H1 (cell line): ENCODE measurements at regions of chr6 and their contacts with region 1.

Region 1: DNA sequence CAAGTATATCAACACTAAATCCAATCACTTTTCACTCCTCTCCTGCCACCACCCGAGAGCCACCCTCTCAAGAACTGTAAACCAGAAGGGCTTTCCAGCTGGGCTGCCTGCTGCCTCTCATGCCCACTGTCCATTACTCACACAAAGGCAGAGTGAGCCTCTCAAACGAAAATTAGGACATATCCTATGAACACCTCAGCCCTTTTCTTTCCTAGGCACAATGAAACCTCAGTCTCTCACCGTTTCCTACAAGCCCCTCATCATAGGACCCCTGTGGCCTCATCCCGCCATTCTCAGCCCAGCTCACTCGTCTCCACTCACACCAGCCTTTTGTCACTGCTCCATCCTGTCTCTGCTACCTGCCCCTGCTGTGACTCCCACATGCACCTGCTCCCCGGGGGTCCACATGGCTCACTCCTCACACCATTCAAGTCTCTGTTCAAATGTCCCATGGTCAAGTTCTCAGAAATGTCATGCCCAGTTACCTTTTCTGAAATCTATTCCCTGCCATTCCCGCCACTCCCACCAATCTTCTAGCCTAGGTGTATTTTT is 7.4 kb downstream of the HLA-F start:
- DNase-seq: no peak
- H3K4me3 ChIP-seq: no peak overlapping the region
- H3K27ac ChIP-seq: no peak overlapping the region
- H3K4me1 ChIP-seq: no peaks in the 10 kb centered on the region
- H3K27me3 ChIP-seq: peaks cover 0 to 2% (median under 1%) of the 10 kb centered on the region in 4 experiments; a peak in 3 of 7 replicates
- CTCF ChIP-seq: no peak
- EP300 ChIP-seq: no peak
- POLR2A ChIP-seq: no peak
- RAD21 ChIP-seq: no peak

Region 2: DNA sequence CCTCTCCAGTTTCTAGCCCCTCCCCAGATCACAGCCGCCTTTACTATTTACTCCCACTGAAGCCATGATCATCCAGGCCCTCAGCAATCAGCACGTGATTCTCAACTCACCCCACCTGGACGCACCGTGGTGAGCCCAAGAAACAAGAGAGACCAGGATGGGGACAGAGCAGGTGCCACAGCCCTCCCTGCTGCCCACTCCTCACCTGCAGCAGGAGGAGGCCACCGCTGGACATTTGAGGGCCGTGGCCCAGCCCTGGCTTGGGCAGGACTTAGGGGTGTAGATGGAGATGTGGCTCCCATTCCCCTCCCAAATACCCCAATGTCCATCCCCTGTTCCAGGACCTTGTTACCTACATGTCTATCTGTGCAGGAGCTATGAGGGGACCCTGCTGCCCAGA is 12.9 kb after region 1 on chr6:
- CTCF ChIA-PET with region 1: interaction called, 88 read pairs
- POLR2A ChIA-PET with region 1: interaction called, 3 read pairs
- DNase-seq: no peak
- H3K4me3 ChIP-seq: no peak overlapping the region
- H3K27ac ChIP-seq: no peak overlapping the region
- H3K4me1 ChIP-seq: peaks cover 0 to 11% (median 6%) of the 10 kb centered on the region in 4 experiments; a peak in 4 of 7 replicates
- H3K27me3 ChIP-seq: peaks cover 3 to 13% (median 12%) of the 10 kb centered on the region in 4 experiments
- CTCF ChIP-seq: no peak
- EP300 ChIP-seq: no peak
- POLR2A ChIP-seq: no peak
- RAD21 ChIP-seq: no peak

Region 3: GRCh38 chr6:30066577-30067459 is 336.2 kb after region 1 on chr6 and contains the start of gene PPP1R11:
- CTCF ChIA-PET with region 1: no interaction called
- POLR2A ChIA-PET with region 1: no interaction called
- DNase-seq: peak; percentile 91 to 97
- H3K4me3 ChIP-seq: peak within 1 kb of the TSS; percentile 73 to 97 (median 83)
- H3K27ac ChIP-seq: peak within 1 kb of the TSS; percentile 65; the same call in 1 of the 2 replicates
- H3K4me1 ChIP-seq: peaks cover 0 to 13% (median 9%) of the 10 kb centered on the region in 4 experiments; a peak in 5 of 7 replicates
- H3K27me3 ChIP-seq: peaks cover 9 to 17% (median 16%) of the 10 kb centered on the region in 4 experiments
- CTCF ChIP-seq: no peak
- EP300 ChIP-seq: 0 out of 3 replicates have a peak, but pooled peaks of 1 of the 2 experiments have one; percentile 51
- POLR2A ChIP-seq: peak; percentile 44 to 84; a peak in 2 of 3 replicates
- RAD21 ChIP-seq: no peak
- total RNA-seq, gene PPP1R11: 26.1 and 26.3 TPM in 2 replicates